PC-3 (cell line): ENCODE measurements at regions of chr3 and their contacts with region 1.

Region 1: GRCh38 chr3:111967651-111968274 is 11.1 kb upstream of the ABHD10 start:
- DNase-seq: peak; percentile 92
- ATAC-seq: peak; percentile 73
- H3K4me3 ChIP-seq: no peak overlapping the region
- H3K27ac ChIP-seq: peak overlapping the region; percentile 13
- H3K4me1 ChIP-seq: peaks cover 41% of the 10 kb centered on the region
- H3K27me3 ChIP-seq: no peaks in the 10 kb centered on the region
- CTCF ChIP-seq: peak; percentile 96

Region 2: DNA sequence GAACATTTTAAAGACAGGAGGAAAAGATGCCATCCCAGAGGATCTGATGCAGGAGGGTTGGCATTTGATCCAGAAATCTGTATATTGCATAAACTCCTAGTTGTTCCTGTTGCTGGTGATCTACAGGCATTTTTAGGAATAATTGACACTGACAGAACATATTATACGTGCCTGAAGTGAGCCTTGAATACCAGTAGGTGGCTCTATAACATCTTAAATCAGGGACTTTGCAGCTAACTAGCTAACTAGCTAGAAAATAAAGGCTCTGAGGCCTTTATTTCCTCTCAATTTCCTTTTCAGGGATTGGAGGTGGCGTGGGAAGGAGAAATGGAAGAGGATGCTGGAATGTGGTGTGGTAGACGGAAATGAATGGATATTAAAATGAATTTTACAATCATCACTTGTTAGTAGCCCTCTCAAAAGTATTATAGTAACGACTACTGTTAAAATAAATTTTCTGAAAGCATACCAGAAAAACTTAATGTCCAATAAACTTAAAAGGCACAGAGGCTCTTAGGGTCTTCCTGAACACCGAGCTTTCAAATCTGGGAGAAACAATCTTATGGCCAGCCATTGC is 298.8 kb before region 1 on chr3:
- CTCF ChIA-PET with region 1: no interaction called
- POLR2A ChIA-PET with region 1: no interaction called
- intact Hi-C with region 1: loop called (anchors 1 kb)
- DNase-seq: peak; percentile 81
- ATAC-seq: peak; percentile 82
- H3K4me3 ChIP-seq: no peak overlapping the region
- H3K27ac ChIP-seq: no peak overlapping the region
- H3K4me1 ChIP-seq: peaks cover 50% of the 10 kb centered on the region
- H3K27me3 ChIP-seq: no peaks in the 10 kb centered on the region
- CTCF ChIP-seq: peak; percentile 95

Region 3: DNA sequence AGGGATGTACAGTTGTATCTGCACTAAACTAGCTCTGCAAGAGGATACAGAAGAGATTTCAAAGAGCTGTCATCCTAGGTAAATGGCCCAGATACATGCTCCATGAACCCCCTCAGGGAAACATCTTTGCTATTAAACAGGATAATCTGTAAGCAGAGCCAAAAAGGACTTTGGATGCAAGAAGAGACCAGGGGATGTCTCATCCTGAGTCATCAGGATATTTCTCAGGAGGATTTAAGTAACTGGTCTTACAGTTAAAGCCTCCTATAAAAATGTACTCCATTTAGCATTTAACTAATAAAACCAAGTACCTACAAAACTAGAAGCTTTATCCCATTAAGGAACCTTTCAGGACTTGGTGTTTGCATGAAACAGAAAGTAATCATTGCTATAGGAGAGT is 156.9 kb before region 1 on chr3:
- CTCF ChIA-PET with region 1: no interaction called
- POLR2A ChIA-PET with region 1: no interaction called
- intact Hi-C with region 1: loop called (anchors 1 kb)
- DNase-seq: peak; percentile 98
- ATAC-seq: peak; percentile 80
- H3K4me3 ChIP-seq: peak overlapping the region; percentile 29; the same call in 1 of the 2 replicates
- H3K27ac ChIP-seq: peak overlapping the region; percentile 85
- H3K4me1 ChIP-seq: peaks cover 55% of the 10 kb centered on the region
- H3K27me3 ChIP-seq: no peaks in the 10 kb centered on the region
- CTCF ChIP-seq: no peak

Region 4: GRCh38 chr3:111895079-111895478 is 72.7 kb before region 1 on chr3:
- CTCF ChIA-PET with region 1: interaction called, 29 read pairs
- POLR2A ChIA-PET with region 1: no interaction called
- intact Hi-C with region 1: loop called (anchors 1 kb)
- DNase-seq: peak; percentile 80
- ATAC-seq: peak; percentile 79
- H3K4me3 ChIP-seq: no peak overlapping the region
- H3K27ac ChIP-seq: no peak overlapping the region
- H3K4me1 ChIP-seq: peaks cover 25% of the 10 kb centered on the region
- H3K27me3 ChIP-seq: no peaks in the 10 kb centered on the region
- CTCF ChIP-seq: peak; percentile 79

Region 5: GRCh38 chr3:111917300-111917699 is 50.5 kb before region 1 on chr3:
- CTCF ChIA-PET with region 1: interaction called, 3 read pairs
- POLR2A ChIA-PET with region 1: no interaction called
- intact Hi-C with region 1: loop called (anchors 1 kb)
- DNase-seq: peak; percentile 94
- ATAC-seq: peak; percentile 97
- H3K4me3 ChIP-seq: peak overlapping the region; percentile 12; the same call in 1 of the 2 replicates
- H3K27ac ChIP-seq: peak overlapping the region; percentile 41
- H3K4me1 ChIP-seq: peaks cover 46% of the 10 kb centered on the region
- H3K27me3 ChIP-seq: no peaks in the 10 kb centered on the region
- CTCF ChIP-seq: no peak

Region 6: DNA sequence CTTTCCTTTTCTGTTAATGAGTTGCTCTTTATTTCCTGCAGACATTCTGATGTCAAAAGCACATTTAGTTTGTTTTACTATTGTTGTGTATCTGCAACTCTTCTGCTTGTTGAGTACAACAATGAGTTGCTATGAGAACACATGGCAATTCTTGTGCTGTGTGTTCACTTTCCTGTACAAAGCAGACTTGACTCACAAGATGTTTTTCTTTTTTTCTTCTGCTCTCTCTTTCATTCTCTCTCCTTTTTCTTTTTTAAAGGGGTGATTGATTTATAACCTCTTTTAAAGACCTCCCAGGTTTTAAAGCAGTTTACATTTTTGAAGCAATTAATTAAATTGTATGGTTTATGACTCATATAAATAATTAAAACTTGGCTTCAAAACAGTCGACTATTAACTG is 20.5 kb before region 1 on chr3:
- CTCF ChIA-PET with region 1: no interaction called
- POLR2A ChIA-PET with region 1: no interaction called
- intact Hi-C with region 1: loop called (anchors 2 kb)
- DNase-seq: no peak
- ATAC-seq: peak; percentile 26; the same call in 1 of the 2 replicates
- H3K4me3 ChIP-seq: no peak overlapping the region
- H3K27ac ChIP-seq: no peak overlapping the region
- H3K4me1 ChIP-seq: peaks cover 15% of the 10 kb centered on the region
- H3K27me3 ChIP-seq: no peaks in the 10 kb centered on the region
- CTCF ChIP-seq: no peak

Region 7: DNA sequence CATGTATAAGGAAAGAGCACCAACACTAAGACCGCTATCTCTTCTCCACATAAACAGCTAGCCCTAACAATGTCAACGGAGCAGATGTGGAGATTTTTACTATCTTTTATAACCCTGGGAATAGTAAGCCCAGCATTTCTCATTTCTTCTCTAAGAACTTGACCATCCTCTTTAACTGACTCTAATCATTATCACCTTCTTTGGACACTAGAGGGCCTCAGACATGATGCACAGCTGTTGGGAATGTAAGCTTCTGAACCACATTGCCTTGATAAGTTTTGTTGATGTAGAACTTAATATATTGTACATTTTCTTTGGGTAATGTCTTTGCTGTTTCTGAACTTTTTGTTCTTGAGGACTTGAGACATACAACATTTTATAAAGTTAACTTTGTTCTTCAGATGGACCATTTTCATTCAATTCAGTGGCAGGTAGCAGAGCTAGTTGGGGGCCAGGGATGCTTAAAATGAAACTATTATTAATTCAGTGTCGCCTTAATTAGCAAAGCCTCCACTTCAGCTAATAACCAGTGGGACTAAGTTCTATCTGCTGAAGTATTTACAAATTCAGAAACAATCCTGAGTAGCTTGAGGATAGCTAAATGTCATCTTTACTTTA is 21.4 kb after region 1 on chr3:
- CTCF ChIA-PET with region 1: interaction called, 12 read pairs
- POLR2A ChIA-PET with region 1: no interaction called
- intact Hi-C with region 1: no loop called
- DNase-seq: peak; percentile 82
- ATAC-seq: peak; percentile 96
- H3K4me3 ChIP-seq: no peak overlapping the region
- H3K27ac ChIP-seq: no peak overlapping the region
- H3K4me1 ChIP-seq: no peaks in the 10 kb centered on the region; the same call in 1 of the 2 replicates
- H3K27me3 ChIP-seq: no peaks in the 10 kb centered on the region
- CTCF ChIP-seq: peak; percentile 94